Activated B cell treated with CpG ODN at 0.5 μM for 24 hours (primary cell): ENCODE measurements at regions of chr11 and their contacts with region 1.

Region 1: DNA sequence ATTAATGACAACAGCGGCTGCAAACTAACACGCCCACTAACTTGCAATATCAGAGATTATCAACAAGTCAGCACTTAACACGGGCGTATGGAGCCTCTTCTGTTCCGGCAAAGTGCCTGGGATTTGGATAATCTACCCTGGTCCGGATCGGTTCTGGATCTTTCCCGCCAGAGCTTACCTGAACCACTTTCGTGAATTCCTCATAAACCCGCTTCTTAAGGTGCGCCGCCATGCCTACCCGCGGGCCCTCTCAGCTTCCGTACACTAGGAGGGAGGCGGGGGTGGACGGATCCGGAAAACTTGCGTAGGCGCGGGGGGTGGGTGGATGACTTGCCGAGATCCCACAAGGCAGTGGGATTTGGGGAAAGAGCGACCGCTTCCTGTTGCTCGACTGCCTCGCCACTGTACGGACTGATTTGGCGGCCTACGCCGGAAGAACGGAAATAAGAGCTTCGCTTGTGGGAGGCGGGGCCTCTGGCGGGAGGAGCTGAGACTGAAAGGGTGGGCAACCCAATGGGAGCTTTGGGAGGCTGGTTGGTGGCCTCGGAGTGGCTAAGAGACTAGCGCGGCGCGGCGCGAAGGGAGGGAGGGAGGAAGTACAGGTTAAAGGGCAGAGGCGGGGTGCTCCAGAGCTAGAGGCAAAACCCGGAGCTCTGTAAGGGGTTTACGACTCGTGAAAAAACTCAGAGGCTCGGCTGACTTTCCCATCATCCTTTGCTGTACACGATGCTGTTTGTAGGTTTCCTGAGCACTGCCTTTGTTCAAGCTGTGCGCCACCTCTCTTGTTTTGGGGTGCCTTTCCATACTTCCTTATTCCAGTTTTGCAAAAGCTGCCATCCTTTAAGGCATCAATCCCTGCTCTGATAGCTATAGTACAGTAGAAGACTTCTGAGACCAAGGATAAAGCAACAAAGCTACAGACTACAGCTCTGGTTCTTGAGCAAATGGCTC is at the start of gene INTS4:
- DNase-seq: peak; percentile 90
- ATAC-seq: peak; percentile 96
- H3K4me3 Mint-ChIP-seq: peak within 1 kb of the TSS; percentile 94
- H3K27ac Mint-ChIP-seq: peak within 1 kb of the TSS; percentile 97
- H3K4me1 Mint-ChIP-seq: peaks cover 45% of the 10 kb centered on the region
- H3K27me3 Mint-ChIP-seq: no peaks in the 10 kb centered on the region
- CTCF ChIP-seq: no peak
- total RNA-seq, gene INTS4: 61.8 and 62.3 TPM in 2 replicates

Region 2: DNA sequence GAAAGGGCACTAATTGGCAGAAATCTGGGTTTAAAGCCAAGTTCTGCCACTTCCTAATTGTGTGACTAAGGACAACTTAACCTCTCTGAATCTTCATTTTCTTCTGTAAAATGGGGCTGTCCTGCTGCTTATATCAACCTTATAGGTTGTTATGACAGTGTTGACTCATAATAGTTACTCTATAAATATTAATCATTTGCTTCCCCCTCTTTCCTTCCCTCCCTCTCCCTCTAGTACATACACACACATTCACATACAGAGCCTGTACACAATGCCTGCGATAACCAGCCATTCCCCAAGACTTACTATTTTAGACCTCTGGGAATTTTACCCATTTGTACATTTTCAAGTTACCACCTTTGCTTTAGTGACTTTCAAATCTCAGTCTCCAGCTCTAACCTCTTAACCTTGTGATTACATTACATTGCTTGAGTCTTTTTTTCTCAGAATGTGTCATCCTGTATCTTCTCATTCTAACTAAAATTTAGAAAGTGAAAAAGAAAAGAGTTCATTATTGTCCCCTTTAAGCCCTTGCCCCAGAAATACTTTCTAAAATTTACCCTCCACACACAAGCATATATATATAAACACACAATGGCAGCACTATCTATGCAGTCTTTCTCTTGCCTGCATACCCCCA is 725.1 kb before region 1 on chr11:
- CTCF ChIA-PET with region 1: no interaction called
- POLR2A ChIA-PET with region 1: no interaction called
- intact Hi-C with region 1: no loop called
- DNase-seq: no peak
- ATAC-seq: no peak
- H3K4me3 Mint-ChIP-seq: no peak overlapping the region
- H3K27ac Mint-ChIP-seq: no peak overlapping the region
- H3K4me1 Mint-ChIP-seq: no peaks in the 10 kb centered on the region
- H3K27me3 Mint-ChIP-seq: peaks cover 8% of the 10 kb centered on the region
- CTCF ChIP-seq: no peak

Region 3: DNA sequence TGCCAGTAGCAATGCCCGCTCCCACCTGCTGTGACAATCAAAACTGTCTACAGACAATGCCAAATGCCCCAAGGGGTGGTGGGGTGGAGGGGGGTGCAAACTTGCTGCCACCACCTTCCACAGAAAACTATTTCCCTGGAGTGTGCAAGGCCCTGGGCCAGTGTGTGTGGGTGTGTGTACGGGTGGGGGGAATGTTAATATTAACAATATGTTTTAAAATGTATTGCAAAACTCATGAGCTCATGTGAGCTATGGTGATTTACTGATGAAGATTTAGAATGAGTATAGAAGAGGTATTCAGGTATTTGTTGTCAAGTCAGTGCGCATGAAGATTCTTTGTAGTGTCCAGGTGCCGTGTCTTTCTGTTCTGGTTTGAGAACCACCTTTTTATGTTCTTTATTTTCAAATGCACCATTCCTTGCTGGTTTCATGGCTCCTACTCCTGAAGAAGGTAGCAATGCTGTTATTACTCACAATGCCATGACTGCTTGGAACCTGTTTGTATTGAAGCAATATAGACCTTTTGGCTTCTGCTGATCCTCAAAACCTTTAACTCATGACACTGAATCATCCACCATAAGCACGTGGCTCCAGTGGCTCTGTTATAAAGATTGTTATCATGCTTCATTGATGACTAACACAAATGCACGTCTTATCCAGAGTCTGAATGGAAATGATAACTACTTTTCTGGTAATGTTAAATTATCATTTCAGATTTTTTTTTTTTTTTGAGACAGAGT is 434.8 kb before region 1 on chr11:
- CTCF ChIA-PET with region 1: no interaction called
- POLR2A ChIA-PET with region 1: no interaction called
- intact Hi-C with region 1: no loop called
- DNase-seq: no peak
- ATAC-seq: no peak
- H3K4me3 Mint-ChIP-seq: no peak overlapping the region
- H3K27ac Mint-ChIP-seq: no peak overlapping the region
- H3K4me1 Mint-ChIP-seq: no peaks in the 10 kb centered on the region
- H3K27me3 Mint-ChIP-seq: no peaks in the 10 kb centered on the region
- CTCF ChIP-seq: no peak

Region 4: GRCh38 chr11:77637345-77638165 is 357.1 kb before region 1 on chr11 and contains the start of gene CLNS1A:
- CTCF ChIA-PET with region 1: no interaction called
- POLR2A ChIA-PET with region 1: no interaction called
- intact Hi-C with region 1: loop called (anchors 1 kb)
- DNase-seq: peak; percentile 70
- ATAC-seq: peak; percentile 99
- H3K4me3 Mint-ChIP-seq: peak within 1 kb of the TSS; percentile 96
- H3K27ac Mint-ChIP-seq: peak within 1 kb of the TSS; percentile 94
- H3K4me1 Mint-ChIP-seq: peaks cover 41% of the 10 kb centered on the region
- H3K27me3 Mint-ChIP-seq: no peaks in the 10 kb centered on the region
- CTCF ChIP-seq: no peak
- total RNA-seq, gene CLNS1A: 112 and 116 TPM in 2 replicates

Region 5: GRCh38 chr11:78045851-78046485 is 51.3 kb after region 1 on chr11:
- CTCF ChIA-PET with region 1: interaction called, 7 read pairs
- POLR2A ChIA-PET with region 1: interaction called, 4 read pairs
- intact Hi-C with region 1: loop called (anchors 2 kb)
- DNase-seq: peak; percentile 81
- ATAC-seq: peak; percentile 98
- H3K4me3 Mint-ChIP-seq: peak overlapping the region; percentile 72
- H3K27ac Mint-ChIP-seq: no peak overlapping the region
- H3K4me1 Mint-ChIP-seq: peaks cover 6% of the 10 kb centered on the region
- H3K27me3 Mint-ChIP-seq: peaks cover 5% of the 10 kb centered on the region
- CTCF ChIP-seq: peak; percentile 95

Region 6: DNA sequence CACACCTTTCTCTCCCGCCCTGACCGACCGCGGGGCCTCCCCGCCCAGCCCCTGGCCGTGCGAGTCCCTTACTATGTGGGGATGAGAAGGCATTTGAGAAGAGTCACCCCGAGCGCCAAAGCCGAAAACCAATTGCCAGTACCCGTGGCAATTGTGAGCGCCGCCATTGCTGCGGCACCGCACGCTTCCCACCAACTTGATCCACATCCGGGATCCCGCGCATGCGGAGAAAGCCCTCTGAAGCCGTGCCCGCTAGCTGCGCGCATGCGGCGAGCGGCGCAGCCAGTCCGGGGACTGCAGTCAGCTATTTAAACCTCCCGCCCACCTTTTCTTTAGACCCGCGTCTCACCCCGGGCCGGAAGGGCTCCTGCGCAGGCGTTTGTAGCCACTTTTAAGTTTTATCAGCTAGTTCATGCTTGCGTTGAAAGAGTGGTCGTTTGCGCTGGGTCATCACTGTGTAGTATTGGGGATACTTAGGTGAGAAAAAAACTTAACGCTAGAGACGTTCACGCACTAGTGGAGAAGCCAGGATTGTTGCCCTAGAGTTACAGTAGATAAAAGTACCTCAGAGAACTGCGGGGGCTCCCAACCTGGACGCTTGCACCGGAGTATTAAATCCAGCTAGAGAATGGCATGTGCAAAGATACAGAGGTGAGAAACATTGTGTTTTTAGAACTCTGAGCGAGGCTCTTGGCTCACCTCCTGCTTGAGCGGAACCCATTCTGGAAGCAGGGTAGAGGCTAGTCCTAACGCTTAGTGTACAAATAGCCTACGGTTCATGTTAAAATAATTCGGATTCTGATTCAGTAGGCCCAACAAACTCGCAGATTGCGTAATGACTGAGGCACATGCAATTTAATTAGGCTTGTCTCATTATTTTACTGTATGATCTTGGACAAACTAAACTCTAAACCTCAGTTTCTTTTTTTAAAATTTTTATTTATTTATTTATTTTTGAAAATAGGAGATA is 145.0 kb after region 1 on chr11 and contains the start of gene ALG8:
- CTCF ChIA-PET with region 1: no interaction called
- POLR2A ChIA-PET with region 1: interaction called, 21 read pairs
- intact Hi-C with region 1: loop called (anchors 1 kb)
- DNase-seq: peak; percentile 94
- ATAC-seq: peak; percentile 94
- H3K4me3 Mint-ChIP-seq: peak within 1 kb of the TSS; percentile 95
- H3K27ac Mint-ChIP-seq: peak within 1 kb of the TSS; percentile 92
- H3K4me1 Mint-ChIP-seq: peaks cover 49% of the 10 kb centered on the region
- H3K27me3 Mint-ChIP-seq: no peaks in the 10 kb centered on the region
- CTCF ChIP-seq: no peak
- total RNA-seq, gene ALG8: 42.8 and 46.0 TPM in 2 replicates

Region 7: DNA sequence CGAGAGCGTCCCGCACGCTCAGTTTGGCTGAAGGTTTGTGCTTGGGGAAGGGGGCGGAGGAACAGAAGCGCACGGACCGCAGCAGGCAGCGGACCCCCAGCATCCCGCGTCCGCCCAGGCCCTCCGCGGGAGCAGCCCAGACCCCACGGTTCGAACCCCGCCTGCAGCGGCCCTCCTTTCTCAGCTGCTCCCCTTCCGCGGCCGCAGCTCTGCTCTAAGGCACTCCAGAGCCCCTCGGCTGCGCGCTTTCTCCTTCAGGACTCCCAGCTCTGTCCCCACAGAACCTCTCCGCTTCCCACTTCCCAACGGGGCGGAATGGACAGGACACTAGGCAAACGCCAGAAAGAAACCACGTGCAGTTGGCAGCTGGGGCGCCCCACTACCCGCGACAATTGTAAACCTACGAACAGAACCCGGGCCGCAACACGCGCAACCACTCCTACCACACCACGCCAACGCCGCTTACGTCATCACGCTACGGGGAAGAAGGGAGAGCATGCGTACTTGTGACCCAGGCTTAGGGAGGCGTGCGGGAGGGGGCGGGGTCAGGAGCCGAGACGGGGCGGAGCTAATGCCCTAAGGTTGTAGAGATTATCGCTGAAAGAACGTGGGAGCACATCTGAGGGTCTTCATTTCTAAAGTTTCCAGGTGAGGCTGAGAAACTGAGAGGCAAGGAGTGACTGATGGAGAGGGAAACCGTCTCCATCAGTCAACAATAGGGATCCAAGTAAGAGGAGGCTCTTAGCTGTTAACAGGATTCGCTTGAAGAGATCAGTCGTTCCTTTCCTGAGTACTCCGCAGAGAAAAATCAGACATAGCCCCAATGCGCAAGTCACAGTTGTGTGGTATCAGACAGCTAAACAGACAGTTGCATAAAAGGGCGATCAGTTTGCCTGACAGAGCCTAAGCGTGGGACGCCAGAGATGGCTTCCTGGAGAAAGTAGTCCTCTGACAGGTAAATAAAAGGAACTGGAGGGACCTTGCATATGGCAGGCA is 580.0 kb after region 1 on chr11 and contains the start of gene NARS2:
- CTCF ChIA-PET with region 1: no interaction called
- POLR2A ChIA-PET with region 1: interaction called, 3 read pairs
- intact Hi-C with region 1: loop called (anchors 1 kb)
- DNase-seq: peak; percentile 90
- ATAC-seq: peak; percentile 99
- H3K4me3 Mint-ChIP-seq: peak within 1 kb of the TSS; percentile 93
- H3K27ac Mint-ChIP-seq: peak within 1 kb of the TSS; percentile 94
- H3K4me1 Mint-ChIP-seq: peaks cover 32% of the 10 kb centered on the region
- H3K27me3 Mint-ChIP-seq: no peaks in the 10 kb centered on the region
- CTCF ChIP-seq: no peak
- total RNA-seq, gene NARS2: 16.5 and 18.9 TPM in 2 replicates